Endothelial cell of umbilical vein (primary cell): ENCODE measurements at regions of chr6 and their contacts with region 1.

Region 1: GRCh38 chr6:26020329-26021000 is 57.9 kb downstream of the TRIM38 start:
- DNase-seq: peak; percentile 96
- H3K4me3 ChIP-seq: peak overlapping the region; percentile 2 to 69 (median 53)
- H3K27ac ChIP-seq: peak overlapping the region; percentile 84
- H3K4me1 ChIP-seq: peaks cover 25% of the 10 kb centered on the region
- H3K27me3 ChIP-seq: no peaks in the 10 kb centered on the region
- CTCF ChIP-seq: no peak
- POLR2A ChIP-seq: peak; percentile 99

Region 2: GRCh38 chr6:25962149-25963127 is 58.0 kb before region 1 on chr6 and contains the start of gene TRIM38:
- CTCF ChIA-PET with region 1: no interaction called
- POLR2A ChIA-PET with region 1: no interaction called
- dilution Hi-C with region 1: no loop called
- intact Hi-C with region 1: loop called (anchors 2 kb)
- DNase-seq: peak; percentile 93
- H3K4me3 ChIP-seq: peak within 1 kb of the TSS; percentile 40 to 86 (median 78)
- H3K27ac ChIP-seq: peak within 1 kb of the TSS; percentile 87
- H3K4me1 ChIP-seq: peaks cover 27% of the 10 kb centered on the region
- H3K27me3 ChIP-seq: no peaks in the 10 kb centered on the region
- CTCF ChIP-seq: no peak
- POLR2A ChIP-seq: peak; percentile 95
- total RNA-seq, gene TRIM38: 13.2 and 13.7 TPM in 2 replicates

Region 3: GRCh38 chr6:26045065-26045927 is 24.8 kb after region 1 on chr6:
- CTCF ChIA-PET with region 1: interaction called, 53 read pairs
- POLR2A ChIA-PET with region 1: interaction called, 44 read pairs
- dilution Hi-C with region 1: no loop called
- intact Hi-C with region 1: loop called (anchors 1 kb)
- DNase-seq: peak; percentile 97
- H3K4me3 ChIP-seq: peak overlapping the region; percentile 3 to 62 (median 45)
- H3K27ac ChIP-seq: peak overlapping the region; percentile 92
- H3K4me1 ChIP-seq: peaks cover 19% of the 10 kb centered on the region
- H3K27me3 ChIP-seq: no peaks in the 10 kb centered on the region
- CTCF ChIP-seq: peak in 1 of 2 donors; percentile 23
- POLR2A ChIP-seq: peak; percentile 98